Ascending aorta (tissue), 2 donors: ENCODE measurements at regions of chr15 and their contacts with region 1.

Region 1: GRCh38 chr15:80970018-80970658 is 19.5 kb downstream of the MESD start:
- DNase-seq: peak in 1 of 2 donors; percentile 64
- H3K4me3 ChIP-seq: no peak overlapping the region
- H3K27ac ChIP-seq: no peak overlapping the region
- H3K4me1 ChIP-seq: no peaks in the 10 kb centered on the region
- H3K27me3 ChIP-seq: no peaks in the 10 kb centered on the region
- CTCF ChIP-seq: peak; percentile 79 to 87 (median 80)

Region 2: GRCh38 chr15:80494351-80494751 is 475.8 kb before region 1 on chr15:
- intact Hi-C with region 1: loop called (anchors 10 kb)
- DNase-seq: no peak
- H3K4me3 ChIP-seq: no peak overlapping the region
- H3K27ac ChIP-seq: no peak overlapping the region
- H3K4me1 ChIP-seq: peaks cover 3 to 7% of the 10 kb centered on the region in 2 donors
- H3K27me3 ChIP-seq: no peaks in the 10 kb centered on the region
- CTCF ChIP-seq: no peak

Region 3: GRCh38 chr15:80776420-80777045 is 193.6 kb before region 1 on chr15:
- intact Hi-C with region 1: loop called (anchors 2 kb)
- DNase-seq: peak in 1 of 2 donors; percentile 77
- H3K4me3 ChIP-seq: no peak overlapping the region
- H3K27ac ChIP-seq: no peak overlapping the region
- H3K4me1 ChIP-seq: peaks cover 14 to 21% of the 10 kb centered on the region in 2 donors
- H3K27me3 ChIP-seq: no peaks in the 10 kb centered on the region
- CTCF ChIP-seq: peak; percentile 59 to 78 (median 72)